Panc1 (cell line): ENCODE measurements at regions of chr1 and their contacts with region 1.

Region 1: GRCh38 chr1:16072616-16073484 is 601 bp downstream of the FAM131C start:
- DNase-seq: no peak
- ATAC-seq: peak; percentile 25
- H3K4me3 ChIP-seq: peak overlapping the region; percentile 45 to 52
- H3K27ac ChIP-seq: no peak overlapping the region
- H3K4me1 ChIP-seq: peaks cover 29% of the 10 kb centered on the region
- H3K27me3 ChIP-seq: no peaks in the 10 kb centered on the region
- CTCF ChIP-seq: no peak

Region 2: GRCh38 chr1:15741183-15741850 is 331.5 kb before region 1 on chr1:
- CTCF ChIA-PET with region 1: interaction called, 10 read pairs
- POLR2A ChIA-PET with region 1: no interaction called
- in situ Hi-C with region 1: no loop called
- intact Hi-C with region 1: no loop called
- DNase-seq: peak; percentile 32
- ATAC-seq: peak; percentile 93
- H3K4me3 ChIP-seq: no peak overlapping the region
- H3K27ac ChIP-seq: no peak overlapping the region
- H3K4me1 ChIP-seq: peaks cover 4% of the 10 kb centered on the region
- H3K27me3 ChIP-seq: no peaks in the 10 kb centered on the region
- CTCF ChIP-seq: peak; percentile 98

Region 3: DNA sequence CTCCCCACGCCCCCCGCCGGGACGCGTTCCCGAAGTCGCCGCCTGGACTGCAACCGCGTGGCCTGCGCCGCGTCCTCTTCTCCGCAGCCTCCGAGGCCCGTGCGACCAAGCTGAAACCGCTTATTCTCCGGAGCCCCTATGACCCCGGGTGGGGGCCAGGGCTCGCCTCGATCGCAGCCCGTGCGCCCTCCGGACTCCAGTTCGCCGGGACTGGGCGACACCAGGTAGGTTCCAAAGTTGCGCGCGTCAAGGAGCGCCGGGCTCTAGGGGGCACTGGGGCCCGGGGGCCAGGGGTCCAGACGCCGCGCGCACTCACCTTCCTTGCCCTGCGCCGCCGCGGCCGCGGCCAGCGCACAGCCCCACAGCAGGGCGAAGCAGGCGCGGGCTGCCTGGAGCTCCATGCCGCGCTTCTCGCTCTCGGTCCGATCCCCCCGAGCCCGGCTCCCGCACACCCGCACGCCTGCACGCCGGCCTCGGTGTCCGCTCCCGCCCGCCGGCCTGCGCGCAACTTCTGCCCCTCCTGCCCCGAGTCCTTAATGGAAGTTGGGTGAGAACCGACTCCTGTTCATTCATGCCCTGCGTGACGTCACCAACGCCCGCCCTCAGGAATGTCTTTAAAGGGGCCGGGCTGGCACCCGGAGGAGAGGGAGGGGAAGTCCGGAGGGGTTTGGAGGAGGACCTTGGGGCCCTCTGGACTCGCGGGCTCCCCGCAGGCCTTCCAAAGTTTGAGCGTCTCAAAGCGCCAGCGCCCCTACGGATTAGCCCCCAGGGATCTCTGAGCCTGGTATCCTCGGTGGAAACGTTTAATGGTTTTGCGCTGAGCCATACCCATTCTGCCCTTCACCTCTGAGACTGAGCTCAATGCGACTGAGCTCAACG is 82.9 kb after region 1 on chr1 and contains the start of gene EPHA2:
- CTCF ChIA-PET with region 1: interaction called, 14 read pairs
- POLR2A ChIA-PET with region 1: interaction called, 4 read pairs
- in situ Hi-C with region 1: no loop called
- intact Hi-C with region 1: no loop called
- DNase-seq: no peak
- ATAC-seq: peak; percentile 81
- H3K4me3 ChIP-seq: peak within 1 kb of the TSS; percentile 91 to 93
- H3K27ac ChIP-seq: peak within 1 kb of the TSS; percentile 100
- H3K4me1 ChIP-seq: peaks cover 51% of the 10 kb centered on the region
- H3K27me3 ChIP-seq: no peaks in the 10 kb centered on the region
- CTCF ChIP-seq: no peak
- total RNA-seq, gene EPHA2: 263 TPM

Region 4: GRCh38 chr1:16196874-16197273 is 124.0 kb after region 1 on chr1:
- CTCF ChIA-PET with region 1: interaction called, 12 read pairs
- POLR2A ChIA-PET with region 1: no interaction called
- in situ Hi-C with region 1: no loop called
- intact Hi-C with region 1: no loop called
- DNase-seq: no peak
- ATAC-seq: no peak
- H3K4me3 ChIP-seq: no peak overlapping the region
- H3K27ac ChIP-seq: no peak overlapping the region
- H3K4me1 ChIP-seq: no peaks in the 10 kb centered on the region
- H3K27me3 ChIP-seq: no peaks in the 10 kb centered on the region
- CTCF ChIP-seq: no peak